ENCODE measurements at regions of chr15 and their contacts with region 1.

Region 1: DNA sequence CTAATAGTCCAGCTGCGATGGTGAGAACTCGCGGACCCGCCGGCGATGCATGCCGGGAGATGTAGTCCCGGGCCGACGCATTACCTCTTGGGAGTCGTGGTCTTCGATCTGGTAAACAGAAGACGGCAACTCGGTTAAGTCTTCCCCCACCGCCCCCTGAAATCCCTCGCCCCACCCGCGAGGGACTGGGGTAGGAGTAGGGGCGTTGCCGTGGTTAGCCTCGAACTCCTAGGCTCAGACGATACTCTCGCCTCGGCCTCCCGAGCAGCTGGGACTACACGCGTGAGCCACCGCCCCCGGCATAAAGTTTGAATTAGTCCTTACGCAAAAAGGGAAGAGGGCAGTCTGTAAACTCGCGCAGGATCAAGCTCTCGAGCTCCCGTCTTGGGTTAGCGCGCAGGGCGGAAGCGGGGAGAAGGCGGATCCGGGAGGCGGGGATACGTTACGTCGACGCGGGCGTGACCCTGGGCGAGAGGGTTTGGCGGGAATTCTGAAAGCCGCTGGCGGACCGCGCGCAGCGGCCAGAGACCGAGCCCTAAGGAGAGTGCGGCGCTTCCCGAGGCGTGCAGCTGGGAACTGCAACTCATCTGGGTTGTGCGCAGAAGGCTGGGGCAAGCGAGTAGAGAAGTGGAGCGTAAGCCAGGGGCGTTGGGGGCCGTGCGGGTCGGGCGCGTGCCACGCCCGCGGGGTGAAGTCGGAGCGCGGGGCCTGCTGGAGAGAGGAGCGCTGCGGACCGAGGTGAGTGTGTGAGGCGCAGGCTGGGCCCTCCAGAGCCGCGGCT is at the start of gene RAD51:
- DNase-seq: peak; percentile 87 to 96 (median 93)
- ATAC-seq: peak; percentile 91
- H3K4me3 ChIP-seq: peak within 1 kb of the TSS; percentile 82
- H3K4me3 Mint-ChIP-seq: peak within 1 kb of the TSS; percentile 97
- H3K27ac ChIP-seq: peak within 1 kb of the TSS; percentile 94 to 99
- H3K27ac Mint-ChIP-seq: peak within 1 kb of the TSS; percentile 98
- H3K4me1 ChIP-seq: peaks cover 23% of the 10 kb centered on the region
- H3K4me1 Mint-ChIP-seq: peaks cover 21% of the 10 kb centered on the region
- H3K27me3 ChIP-seq: no peaks in the 10 kb centered on the region
- H3K27me3 Mint-ChIP-seq: no peaks in the 10 kb centered on the region
- CTCF ChIP-seq: no peak
- total RNA-seq, gene RAD51: 0.64 to 1.5 TPM

Region 2: DNA sequence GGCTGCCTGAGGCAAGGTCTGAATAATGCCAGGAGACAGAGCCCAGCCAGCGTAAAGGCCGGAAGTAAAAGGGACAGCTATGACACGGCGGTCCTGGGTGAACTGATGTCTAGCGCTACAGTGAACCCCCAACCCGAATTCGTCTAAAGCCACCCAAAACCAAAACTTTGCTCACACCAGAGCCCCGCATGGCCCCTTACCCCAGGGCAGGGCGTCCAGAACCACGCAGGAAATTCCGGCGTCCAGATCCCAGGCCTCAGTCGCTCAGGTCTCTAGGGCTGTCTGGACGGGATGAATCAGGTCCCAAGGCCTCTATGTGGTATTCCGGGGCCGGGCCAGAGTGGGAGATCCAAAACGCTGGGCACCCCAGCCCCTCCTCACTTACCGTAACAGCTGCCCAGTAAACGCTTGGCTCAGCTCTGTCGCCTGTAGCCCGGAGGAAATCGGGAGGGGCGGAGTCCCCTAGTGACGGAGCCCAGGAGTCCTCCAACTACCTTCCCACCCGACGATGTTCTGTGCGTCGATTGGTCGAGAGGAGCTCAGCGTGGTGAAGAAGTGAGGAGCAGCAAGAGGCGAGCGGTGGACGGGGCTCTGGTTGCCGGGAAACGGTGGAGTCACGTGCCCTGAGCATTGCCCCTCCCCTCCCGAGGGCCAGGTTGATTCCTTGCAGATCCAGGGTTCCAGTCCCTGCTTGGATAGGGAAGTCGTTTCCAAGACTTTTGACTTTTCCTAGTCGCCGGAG is 130.1 kb before region 1 on chr15 and contains the start of gene CCDC32:
- CTCF ChIA-PET with region 1: no interaction called
- POLR2A ChIA-PET with region 1: interaction called, 19 read pairs
- intact Hi-C with region 1: loop called in 1 of 2 experiments (anchors 10 kb)
- DNase-seq: peak; percentile 84 to 99 (median 92)
- ATAC-seq: peak; percentile 93
- H3K4me3 ChIP-seq: peak within 1 kb of the TSS; percentile 76
- H3K4me3 Mint-ChIP-seq: peak within 1 kb of the TSS; percentile 97
- H3K27ac ChIP-seq: peak within 1 kb of the TSS; percentile 85 to 89
- H3K27ac Mint-ChIP-seq: peak within 1 kb of the TSS; percentile 88
- H3K4me1 ChIP-seq: peaks cover 34% of the 10 kb centered on the region
- H3K4me1 Mint-ChIP-seq: peaks cover 43% of the 10 kb centered on the region
- H3K27me3 ChIP-seq: no peaks in the 10 kb centered on the region
- H3K27me3 Mint-ChIP-seq: no peaks in the 10 kb centered on the region
- CTCF ChIP-seq: no peak
- total RNA-seq, gene CCDC32: 20.9 to 21.3 TPM

Region 3: GRCh38 chr15:40754883-40755811 is 60.3 kb after region 1 on chr15 and contains the start of gene RMDN3:
- CTCF ChIA-PET with region 1: no interaction called
- POLR2A ChIA-PET with region 1: interaction called, 4 read pairs
- intact Hi-C with region 1: loop called (anchors 1 kb)
- DNase-seq: peak; percentile 86 to 97 (median 92)
- ATAC-seq: peak; percentile 95
- H3K4me3 ChIP-seq: peak within 1 kb of the TSS; percentile 95
- H3K4me3 Mint-ChIP-seq: peak within 1 kb of the TSS; percentile 98
- H3K27ac ChIP-seq: peak within 1 kb of the TSS; percentile 65 to 78
- H3K27ac Mint-ChIP-seq: peak within 1 kb of the TSS; percentile 98
- H3K4me1 ChIP-seq: peaks cover 30% of the 10 kb centered on the region
- H3K4me1 Mint-ChIP-seq: peaks cover 30% of the 10 kb centered on the region
- H3K27me3 ChIP-seq: no peaks in the 10 kb centered on the region
- H3K27me3 Mint-ChIP-seq: no peaks in the 10 kb centered on the region
- CTCF ChIP-seq: no peak
- total RNA-seq, gene RMDN3: 29.1 to 30.3 TPM

Region 4: DNA sequence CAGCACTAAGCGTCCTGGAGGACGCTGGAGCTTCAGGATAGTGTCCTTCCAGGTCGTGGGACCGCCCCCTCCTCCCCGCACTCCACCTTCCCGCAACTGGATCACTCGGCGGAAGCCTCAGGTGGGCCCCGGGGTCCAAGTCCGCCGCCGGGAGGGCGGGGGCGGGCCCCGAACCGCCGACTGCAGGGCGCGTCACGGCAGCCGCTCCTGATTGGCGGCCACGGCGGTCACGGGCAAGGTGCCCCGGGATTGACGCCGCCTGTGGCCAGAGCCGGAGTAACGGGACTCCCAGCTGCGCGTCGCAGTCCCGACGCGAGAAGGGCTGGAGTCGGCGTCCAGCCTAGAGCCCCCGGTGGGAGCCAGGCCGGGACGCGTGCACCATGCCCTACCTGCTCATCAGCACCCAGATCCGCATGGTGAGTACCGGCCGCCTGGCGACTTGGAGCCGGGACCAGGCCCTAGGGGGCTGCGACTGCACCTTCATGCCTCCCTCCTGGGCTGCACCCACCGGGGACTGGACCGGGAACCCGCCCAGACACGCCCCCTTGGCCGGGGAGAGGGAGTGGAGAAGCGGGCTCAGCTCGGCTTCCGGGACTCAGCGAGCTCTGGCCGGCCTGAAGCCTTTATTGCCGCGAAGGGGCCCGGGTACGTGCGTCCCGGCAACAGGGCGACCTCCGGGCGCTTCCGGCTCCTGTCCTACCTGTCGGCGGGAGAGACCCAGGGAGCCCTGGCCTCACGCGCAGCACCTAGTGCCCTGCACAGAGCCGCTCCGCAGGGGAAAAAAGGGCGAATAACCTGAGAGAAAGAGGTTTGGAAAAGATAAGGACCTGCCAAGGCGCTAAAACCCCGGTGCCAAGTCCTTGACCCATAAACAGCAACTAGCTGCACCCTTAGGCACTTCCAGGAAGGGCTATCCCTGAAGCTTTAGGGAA is 69.2 kb after region 1 on chr15 and contains the start of gene GCHFR:
- CTCF ChIA-PET with region 1: interaction called, 3 read pairs
- POLR2A ChIA-PET with region 1: interaction called, 25 read pairs
- intact Hi-C with region 1: loop called in 1 of 2 experiments (anchors 5 kb)
- DNase-seq: peak; percentile 35 to 87 (median 63)
- ATAC-seq: peak; percentile 48
- H3K4me3 ChIP-seq: peak within 1 kb of the TSS; percentile 98
- H3K4me3 Mint-ChIP-seq: peak within 1 kb of the TSS; percentile 89
- H3K27ac ChIP-seq: peak within 1 kb of the TSS; percentile 60 to 71
- H3K27ac Mint-ChIP-seq: peak within 1 kb of the TSS; percentile 90
- H3K4me1 ChIP-seq: peaks cover 40% of the 10 kb centered on the region
- H3K4me1 Mint-ChIP-seq: peaks cover 30% of the 10 kb centered on the region
- H3K27me3 ChIP-seq: no peaks in the 10 kb centered on the region
- H3K27me3 Mint-ChIP-seq: no peaks in the 10 kb centered on the region
- CTCF ChIP-seq: peak; percentile 45
- total RNA-seq, gene GCHFR: 13.5 to 14.8 TPM

Region 5: GRCh38 chr15:40769274-40770146 is 74.6 kb after region 1 on chr15 and contains the start of gene C15orf62:
- CTCF ChIA-PET with region 1: interaction called, 3 read pairs
- POLR2A ChIA-PET with region 1: interaction called, 25 read pairs
- intact Hi-C with region 1: loop called in 1 of 2 experiments (anchors 5 kb)
- DNase-seq: peak in 12 of 14 experiments; percentile 30 to 84 (median 51)
- ATAC-seq: peak; percentile 54
- H3K4me3 ChIP-seq: no peak within 1 kb of the TSS
- H3K4me3 Mint-ChIP-seq: peak within 1 kb of the TSS; percentile 50
- H3K27ac ChIP-seq: peak within 1 kb of the TSS in 1 of 2 donors; percentile 25
- H3K27ac Mint-ChIP-seq: peak within 1 kb of the TSS; percentile 89
- H3K4me1 ChIP-seq: peaks cover 39% of the 10 kb centered on the region
- H3K4me1 Mint-ChIP-seq: peaks cover 33% of the 10 kb centered on the region
- H3K27me3 ChIP-seq: no peaks in the 10 kb centered on the region
- H3K27me3 Mint-ChIP-seq: no peaks in the 10 kb centered on the region
- CTCF ChIP-seq: no peak
- total RNA-seq, gene C15orf62: 0.77 to 0.98 TPM

Region 6: DNA sequence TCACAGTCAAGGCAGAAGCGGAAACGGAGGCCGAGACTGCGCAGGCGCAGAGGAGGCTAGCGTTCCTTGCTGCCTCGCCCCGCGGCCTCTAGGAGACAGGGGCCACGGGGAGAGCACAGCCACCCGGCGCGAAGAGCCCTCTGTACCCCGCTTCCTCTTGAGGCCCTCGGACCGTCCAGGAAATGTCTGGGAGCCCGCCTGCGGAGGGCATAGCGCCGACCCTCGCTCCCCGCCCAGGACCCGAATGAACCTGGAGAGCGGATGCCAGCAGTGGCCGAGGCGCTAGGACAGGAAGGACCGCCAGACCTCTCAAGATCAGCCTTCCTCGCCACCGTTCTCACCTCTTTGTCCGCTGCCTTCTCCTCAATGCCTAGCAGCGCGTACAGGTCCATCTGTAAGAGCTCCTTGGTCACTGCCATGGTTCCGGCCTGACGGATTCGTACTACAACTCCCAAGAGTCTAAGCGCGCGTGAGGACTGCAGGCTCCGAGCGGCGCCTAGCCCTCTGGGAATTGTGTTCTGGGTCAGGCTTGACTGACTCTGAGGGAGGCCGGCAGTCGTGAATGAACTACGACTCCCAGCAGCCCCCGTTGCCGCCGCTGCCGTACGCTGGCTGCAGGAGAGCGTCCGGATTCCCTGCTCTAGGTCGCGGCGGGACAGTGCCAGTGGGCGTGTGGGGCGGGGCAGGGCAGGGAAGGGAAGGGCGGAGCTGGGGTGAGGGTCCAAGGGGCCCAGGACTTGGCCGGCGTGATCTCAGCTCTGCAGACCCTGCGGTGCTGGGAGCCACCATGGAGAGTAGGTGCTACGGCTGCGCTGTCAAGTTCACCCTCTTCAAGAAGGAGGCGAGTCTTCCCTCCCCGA is 112.4 kb after region 1 on chr15 and contains the starts of genes DNAJC17 and ZFYVE19:
- CTCF ChIA-PET with region 1: no interaction called
- POLR2A ChIA-PET with region 1: interaction called, 13 read pairs
- intact Hi-C with region 1: loop called in 1 of 2 experiments (anchors 1 kb)
- DNase-seq: peak; percentile 86 to 97 (median 92)
- ATAC-seq: peak; percentile 97
- H3K4me3 ChIP-seq: peak within 1 kb of the TSS; percentile 80
- H3K4me3 Mint-ChIP-seq: peak within 1 kb of the TSS; percentile 96
- H3K27ac ChIP-seq: peak within 1 kb of the TSS; percentile 90 to 93
- H3K27ac Mint-ChIP-seq: peak within 1 kb of the TSS; percentile 91
- H3K4me1 ChIP-seq: peaks cover 30% of the 10 kb centered on the region
- H3K4me1 Mint-ChIP-seq: peaks cover 23% of the 10 kb centered on the region
- H3K27me3 ChIP-seq: no peaks in the 10 kb centered on the region
- H3K27me3 Mint-ChIP-seq: no peaks in the 10 kb centered on the region
- CTCF ChIP-seq: no peak
- total RNA-seq, gene DNAJC17: 14.4 to 17.9 TPM
- total RNA-seq, gene ZFYVE19: 12.0 to 13.0 TPM

Region 7: GRCh38 chr15:40974879-40975278 is 280.0 kb after region 1 on chr15:
- CTCF ChIA-PET with region 1: no interaction called
- POLR2A ChIA-PET with region 1: no interaction called
- intact Hi-C with region 1: no loop called
- DNase-seq: no peak
- ATAC-seq: no peak
- H3K4me3 ChIP-seq: no peak overlapping the region
- H3K4me3 Mint-ChIP-seq: no peak overlapping the region
- H3K27ac ChIP-seq: no peak overlapping the region
- H3K27ac Mint-ChIP-seq: no peak overlapping the region
- H3K4me1 ChIP-seq: no peaks in the 10 kb centered on the region
- H3K4me1 Mint-ChIP-seq: no peaks in the 10 kb centered on the region
- H3K27me3 ChIP-seq: no peaks in the 10 kb centered on the region
- H3K27me3 Mint-ChIP-seq: no peaks in the 10 kb centered on the region
- CTCF ChIP-seq: no peak

Measured in CD4-positive, alpha-beta T cell (primary cell).